ENCODE measurements at regions of chr17 and their contacts with region 1.

Region 1: GRCh38 chr17:14935139-14935841 is 329.8 kb downstream of the PMP22 start:
- DNase-seq: no peak
- ATAC-seq: peak; percentile 51

Region 2: DNA sequence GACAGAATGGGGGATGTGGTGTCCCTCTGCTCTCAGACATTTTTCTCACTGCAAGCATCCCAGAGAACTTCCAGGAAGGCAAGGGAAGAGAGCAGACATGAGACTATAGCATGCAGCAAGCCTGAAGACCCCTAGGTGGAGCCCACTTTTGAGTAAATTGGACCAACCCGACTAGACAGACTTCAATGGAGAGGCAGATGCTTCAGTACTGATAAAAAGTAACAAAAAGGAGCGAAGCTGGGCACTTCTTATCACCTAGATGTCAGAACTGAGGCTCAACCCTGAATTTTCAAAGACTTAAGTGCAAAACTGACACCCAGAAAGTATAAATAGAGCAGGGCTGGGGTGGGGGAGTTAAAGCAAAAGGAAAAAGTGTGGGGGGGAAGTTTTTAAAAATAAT is 199.1 kb after region 1 on chr17:
- intact Hi-C with region 1: no loop called
- DNase-seq: no peak
- ATAC-seq: no peak

Region 3: DNA sequence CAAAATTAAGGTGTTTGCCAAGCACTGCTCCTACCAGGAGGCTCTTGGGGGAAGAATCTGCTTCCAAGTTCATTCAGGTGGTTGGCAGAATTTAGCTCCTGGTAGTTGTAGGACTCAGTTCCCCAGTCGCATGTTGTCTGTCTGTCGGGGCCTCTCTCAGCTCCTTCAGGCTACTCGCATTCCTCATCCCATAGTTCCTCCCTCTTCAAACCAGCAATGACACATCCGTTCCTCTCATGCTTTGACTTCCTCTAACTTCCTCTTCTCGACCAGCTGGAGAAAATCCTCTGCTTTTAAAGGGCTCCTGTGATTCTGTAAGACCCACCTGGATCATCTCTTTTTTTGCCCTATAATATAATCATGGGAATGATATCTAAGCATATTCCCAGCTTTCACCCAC is 221.8 kb after region 1 on chr17:
- intact Hi-C with region 1: loop called (anchors 5 kb)
- DNase-seq: no peak
- ATAC-seq: peak; percentile 31

Region 4: GRCh38 chr17:15171167-15172047 is 236.1 kb after region 1 on chr17:
- intact Hi-C with region 1: loop called (anchors 5 kb)
- DNase-seq: peak; percentile 75
- ATAC-seq: peak; percentile 96

Measured in Right ventricle myocardium superior (tissue), 1 donor.